Posterior cingulate gyrus (tissue), 11 donors: ENCODE measurements at regions of chr18 and their contacts with region 1.

Region 1: DNA sequence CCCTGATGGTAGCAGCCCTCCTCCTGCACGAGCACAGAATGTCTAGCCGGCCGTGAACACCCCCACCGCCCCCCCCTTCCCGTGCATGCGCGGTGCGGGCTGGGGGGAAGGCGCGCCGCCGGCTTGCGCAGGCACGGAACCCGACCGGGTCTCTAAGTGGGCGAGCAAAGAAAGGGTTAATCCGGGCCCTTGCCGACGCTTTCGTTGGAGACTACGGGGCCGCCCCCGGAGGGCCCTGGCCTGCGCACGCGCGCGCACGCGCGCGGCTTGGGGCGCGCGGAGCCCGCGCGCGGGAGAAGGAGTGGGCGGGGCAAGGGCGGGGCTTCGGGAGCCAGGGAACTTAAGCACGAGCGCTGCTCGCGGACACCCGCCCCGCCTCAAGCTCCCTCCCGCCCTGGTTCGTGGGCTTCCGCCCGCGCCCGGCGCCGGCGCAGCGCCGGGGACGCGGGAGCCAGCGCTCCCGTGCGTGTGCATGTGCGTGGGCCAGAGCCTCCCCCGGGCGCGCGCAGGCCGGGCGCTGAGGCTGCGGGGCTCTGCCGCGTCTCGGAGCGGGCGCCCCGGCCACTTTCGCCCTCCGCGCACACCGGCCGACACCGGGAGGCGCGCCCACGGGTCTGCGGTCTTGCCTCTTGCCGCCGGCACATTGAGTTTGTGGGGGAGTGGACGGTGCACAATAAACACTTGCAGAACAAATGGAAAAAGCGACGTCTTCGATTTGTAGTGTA is 617 bp upstream of the ZBTB14 start:
- DNase-seq: peak; percentile 80 to 98 (median 88)

Region 2: DNA sequence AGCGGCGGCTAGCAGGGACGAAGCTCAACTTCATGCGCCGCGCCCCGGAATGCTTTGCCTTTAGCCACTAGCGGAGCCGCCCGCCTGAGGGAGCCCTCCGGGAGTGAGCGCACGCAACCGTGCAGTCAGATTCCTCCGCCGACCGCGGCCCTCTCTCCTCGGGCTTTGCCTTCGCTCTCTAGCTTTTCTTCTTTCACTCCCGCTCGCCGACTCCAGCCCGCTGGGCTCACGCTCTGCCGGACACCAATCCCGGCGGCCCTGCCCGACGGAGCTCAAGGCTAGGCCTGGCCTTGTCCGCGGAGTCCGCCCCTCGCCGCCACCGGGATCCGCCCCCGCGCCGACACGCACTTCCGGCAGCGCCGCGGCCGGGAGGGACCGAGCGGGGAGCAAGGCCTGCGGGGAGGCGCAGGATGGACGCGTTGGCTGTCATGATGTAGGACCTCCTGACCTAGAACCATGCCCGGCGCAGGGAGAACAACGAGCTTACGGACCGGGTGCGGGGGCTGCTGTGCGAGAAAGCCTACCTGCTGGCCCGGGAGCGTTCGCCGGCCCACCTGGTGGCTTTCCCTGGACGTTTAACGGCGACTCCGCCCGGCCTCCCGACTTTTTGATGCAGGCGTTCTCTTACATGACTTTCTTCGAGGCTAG is 58.3 kb before region 1 on chr18:
- intact Hi-C with region 1: loop called (anchors 1 kb)
- DNase-seq: peak; percentile 81 to 98 (median 88)

Region 3: GRCh38 chr18:5253910-5254309 is 42.2 kb before region 1 on chr18:
- intact Hi-C with region 1: no loop called
- DNase-seq: no peak

Region 4: GRCh38 chr18:5417342-5417741 is 121.2 kb after region 1 on chr18:
- intact Hi-C with region 1: loop called (anchors 2 kb)
- DNase-seq: peak; percentile 52 to 94 (median 66)